Sciatic nerve (tissue), 2 donors: ENCODE measurements at regions of chr4 and their contacts with region 1.

Region 1: DNA sequence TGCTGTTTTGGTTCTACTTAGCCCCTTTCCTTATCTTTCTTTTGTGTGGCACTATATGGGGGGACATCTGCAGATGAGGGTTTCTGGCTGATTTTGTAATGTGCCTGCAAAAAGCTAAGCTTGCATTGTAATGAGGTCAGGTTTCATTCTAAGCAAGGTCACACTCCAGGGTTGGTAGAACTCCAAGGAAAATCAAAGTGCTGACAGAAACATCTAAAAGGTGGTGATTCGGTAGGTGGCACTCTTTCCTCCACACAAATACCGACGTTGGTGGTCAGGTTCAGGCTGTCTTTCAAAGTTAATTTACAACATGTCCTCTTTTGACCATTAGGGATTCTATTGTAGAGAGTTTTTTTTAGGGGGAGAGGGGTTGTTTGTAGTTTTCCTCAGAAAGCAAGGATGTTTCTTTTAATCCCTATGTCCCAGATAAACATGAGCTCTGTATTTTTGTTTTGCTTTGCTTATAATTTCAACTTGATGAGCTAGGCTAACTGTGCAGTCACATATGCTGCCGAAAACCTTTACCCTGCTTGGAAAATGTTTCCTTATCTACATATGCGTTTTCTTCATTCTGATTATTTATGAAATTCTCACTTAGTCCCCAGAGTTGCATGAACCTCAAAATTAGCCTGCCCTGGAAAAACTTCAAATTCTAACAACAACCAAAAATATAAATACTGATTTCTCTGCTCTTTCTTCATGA is 434.2 kb downstream of the PPARGC1A start:
- DNase-seq: no peak
- ATAC-seq: no peak

Region 2: GRCh38 chr4:23039813-23040212 is 415.8 kb before region 1 on chr4:
- intact Hi-C with region 1: no loop called
- DNase-seq: no peak
- ATAC-seq: no peak

Region 3: DNA sequence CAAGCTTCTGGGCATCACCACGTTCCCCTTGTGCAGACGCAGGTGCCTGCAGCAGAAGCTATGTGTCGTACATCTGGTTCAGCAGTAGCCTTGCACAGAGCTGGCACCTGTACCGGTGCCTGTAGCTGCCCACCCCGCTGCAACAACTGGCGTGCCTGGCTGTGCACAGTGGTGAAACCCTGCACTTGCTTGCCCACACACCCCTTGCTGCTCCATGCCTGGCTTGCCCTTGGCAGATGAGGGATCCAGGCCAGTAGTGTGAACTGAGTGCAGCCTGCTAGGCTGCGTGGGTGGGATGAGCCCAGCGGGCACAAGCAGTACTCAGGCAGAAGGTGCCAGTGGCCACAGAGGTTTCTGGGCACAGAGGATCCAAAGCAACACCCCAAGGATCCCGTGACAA is 94.2 kb before region 1 on chr4:
- intact Hi-C with region 1: loop called (anchors 5 kb)
- DNase-seq: no peak
- ATAC-seq: no peak